Activated naive CD4-positive, alpha-beta T cell treated with anti-CD3 and anti-CD28 coated beads for 36 hours (primary cell): ENCODE measurements at regions of chr14 and their contacts with region 1.

Region 1: GRCh38 chr14:67187210-67187609 is 2.0 kb upstream of the GARIN2 start:
- DNase-seq: no peak
- H3K4me3 Mint-ChIP-seq: no peak overlapping the region
- H3K27ac Mint-ChIP-seq: no peak overlapping the region
- H3K4me1 Mint-ChIP-seq: peaks cover 17% of the 10 kb centered on the region
- H3K27me3 Mint-ChIP-seq: peaks cover 3% of the 10 kb centered on the region

Region 2: GRCh38 chr14:67158566-67158965 is 28.6 kb before region 1 on chr14:
- CTCF ChIA-PET with region 1: no interaction called
- intact Hi-C with region 1: loop called (anchors 1 kb)
- DNase-seq: no peak
- H3K4me3 Mint-ChIP-seq: no peak overlapping the region
- H3K27ac Mint-ChIP-seq: no peak overlapping the region
- H3K4me1 Mint-ChIP-seq: peaks cover 16% of the 10 kb centered on the region
- H3K27me3 Mint-ChIP-seq: no peaks in the 10 kb centered on the region

Region 3: DNA sequence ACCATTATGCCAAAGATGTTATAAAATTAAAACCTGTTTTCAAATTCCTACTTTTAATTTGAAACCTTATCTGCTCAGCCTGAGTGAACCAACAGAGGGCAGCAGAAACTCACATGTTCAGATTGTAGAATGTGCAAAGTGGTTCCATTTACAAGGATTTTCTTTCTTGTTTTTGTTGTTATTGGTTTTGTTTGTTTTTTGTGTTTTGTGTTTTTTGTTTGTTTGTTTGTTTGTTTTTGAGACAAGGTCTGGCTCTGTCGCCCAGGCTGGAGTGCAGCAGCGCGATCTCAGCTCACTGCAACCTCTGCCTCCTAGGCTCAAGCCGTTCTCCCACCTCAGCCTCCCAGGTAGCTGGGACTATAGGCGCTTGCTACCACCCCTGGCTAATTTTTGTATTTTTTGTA is 20.8 kb before region 1 on chr14:
- CTCF ChIA-PET with region 1: interaction called, 4 read pairs
- intact Hi-C with region 1: loop called (anchors 2 kb)
- DNase-seq: peak; percentile 71
- H3K4me3 Mint-ChIP-seq: no peak overlapping the region
- H3K27ac Mint-ChIP-seq: no peak overlapping the region
- H3K4me1 Mint-ChIP-seq: no peaks in the 10 kb centered on the region
- H3K27me3 Mint-ChIP-seq: no peaks in the 10 kb centered on the region

Region 4: GRCh38 chr14:67228325-67228984 is 41.2 kb after region 1 on chr14:
- CTCF ChIA-PET with region 1: no interaction called
- intact Hi-C with region 1: loop called (anchors 5 kb)
- DNase-seq: no peak
- H3K4me3 Mint-ChIP-seq: no peak overlapping the region
- H3K27ac Mint-ChIP-seq: no peak overlapping the region
- H3K4me1 Mint-ChIP-seq: no peaks in the 10 kb centered on the region
- H3K27me3 Mint-ChIP-seq: peaks cover 7% of the 10 kb centered on the region

Region 5: GRCh38 chr14:67240978-67241414 is 53.8 kb after region 1 on chr14:
- CTCF ChIA-PET with region 1: no interaction called
- intact Hi-C with region 1: loop called (anchors 1 kb)
- DNase-seq: peak; percentile 94
- H3K4me3 Mint-ChIP-seq: peak overlapping the region; percentile 85
- H3K27ac Mint-ChIP-seq: peak overlapping the region; percentile 86
- H3K4me1 Mint-ChIP-seq: peaks cover 19% of the 10 kb centered on the region
- H3K27me3 Mint-ChIP-seq: peaks cover 2% of the 10 kb centered on the region